Panc1 (cell line): ENCODE measurements at regions of chr9 and their contacts with region 1.

Region 1: DNA sequence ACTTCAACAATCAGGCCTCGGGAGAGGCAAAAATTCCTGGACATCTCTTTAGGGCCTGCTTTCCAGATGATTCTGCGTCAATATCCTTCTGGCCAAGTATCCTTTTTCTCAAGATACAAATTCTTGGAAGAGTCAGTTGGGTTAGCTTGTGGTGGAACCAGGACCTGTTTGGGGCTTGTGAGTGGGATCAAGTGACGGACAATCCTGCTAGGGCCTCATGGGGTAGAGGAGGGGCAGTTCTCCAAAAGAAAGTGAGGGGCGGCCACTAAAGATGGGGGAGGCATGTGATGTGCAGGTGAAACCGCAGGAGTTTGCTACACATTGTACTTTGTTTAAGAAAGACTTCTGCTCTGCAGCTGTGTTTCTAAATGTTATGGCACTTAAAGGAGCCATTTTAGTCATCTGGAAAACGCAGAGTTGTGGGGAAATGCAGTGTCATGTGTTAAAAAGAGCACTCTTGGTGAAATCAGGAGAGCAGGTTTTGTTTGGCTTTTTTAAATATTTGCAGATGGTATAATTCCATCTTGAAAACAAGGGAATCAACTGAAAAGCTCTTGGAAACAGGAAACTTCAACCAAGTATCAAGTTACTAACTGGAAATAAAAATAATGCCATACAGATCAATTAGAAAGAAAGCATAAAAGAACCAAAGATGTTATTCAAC is 27.4 kb upstream of the GSN start:
- DNase-seq: no peak
- ATAC-seq: no peak
- H3K4me3 ChIP-seq: no peak overlapping the region
- H3K27ac ChIP-seq: no peak overlapping the region
- H3K4me1 ChIP-seq: no peaks in the 10 kb centered on the region
- H3K27me3 ChIP-seq: no peaks in the 10 kb centered on the region
- CTCF ChIP-seq: no peak

Region 2: GRCh38 chr9:121463026-121463807 is 222.6 kb after region 1 on chr9:
- CTCF ChIA-PET with region 1: no interaction called
- POLR2A ChIA-PET with region 1: interaction called, 13 read pairs
- in situ Hi-C with region 1: no loop called
- intact Hi-C with region 1: no loop called
- DNase-seq: no peak
- ATAC-seq: no peak
- H3K4me3 ChIP-seq: no peak overlapping the region
- H3K27ac ChIP-seq: no peak overlapping the region
- H3K4me1 ChIP-seq: no peaks in the 10 kb centered on the region
- H3K27me3 ChIP-seq: peaks cover 2% of the 10 kb centered on the region
- CTCF ChIP-seq: peak; percentile 72